ENCODE measurements at regions of chr1 and their contacts with region 1.

Region 1: DNA sequence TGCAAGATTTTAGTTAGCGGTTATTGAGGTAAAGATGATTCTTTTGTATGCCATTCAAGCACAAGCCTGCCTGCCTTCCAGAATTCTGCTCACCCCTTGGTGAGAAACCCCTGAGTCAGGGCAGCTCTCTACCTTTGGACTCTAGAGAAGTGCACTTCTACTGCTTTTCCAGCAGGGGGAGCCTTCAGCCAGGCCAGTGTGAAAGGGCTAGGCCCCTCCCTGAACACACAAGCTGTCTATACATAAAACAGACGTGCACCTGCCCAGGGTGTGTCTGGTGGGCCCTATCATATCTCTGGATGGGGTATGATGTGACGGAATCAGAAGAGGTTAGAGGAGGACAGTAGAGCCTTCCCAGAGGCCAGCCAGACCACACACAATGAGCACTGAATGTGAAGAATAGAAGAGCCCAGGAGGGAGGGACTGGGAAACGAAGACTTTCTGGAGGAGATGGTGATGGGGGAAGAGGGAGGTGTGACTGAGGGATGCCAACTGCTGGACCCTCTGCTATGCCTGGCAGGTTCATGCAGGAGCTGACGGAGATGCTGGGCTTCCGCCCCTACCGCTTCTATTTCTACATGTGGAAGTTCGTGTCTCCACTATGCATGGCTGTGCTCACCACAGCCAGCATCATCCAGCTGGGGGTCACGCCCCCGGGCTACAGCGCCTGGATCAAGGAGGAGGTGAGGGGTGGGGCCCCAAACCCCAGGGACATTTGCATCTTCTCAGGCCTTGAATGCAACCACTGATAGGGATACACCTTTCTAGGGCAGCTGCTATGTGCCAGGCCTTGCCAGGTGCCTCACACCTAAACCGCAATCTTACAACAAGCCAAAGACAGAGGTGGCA is 13.0 kb upstream of the KCNC4 start:
- DNase-seq: peak in 34 of 35 experiments; percentile 17 to 65 (median 40)
- ATAC-seq: peak; percentile 82 to 93 (median 86)
- H3K4me3 ChIP-seq: no peak overlapping the region
- H3K4me3 Mint-ChIP-seq: no peak overlapping the region
- H3K27ac ChIP-seq: no peak overlapping the region
- H3K27ac Mint-ChIP-seq: no peak overlapping the region
- H3K4me1 ChIP-seq: no peaks in the 10 kb centered on the region
- H3K4me1 Mint-ChIP-seq: peaks cover 0 to 8% (median 2%) of the 10 kb centered on the region in 3 donors
- H3K27me3 ChIP-seq: peaks cover 0 to 6% of the 10 kb centered on the region in 2 experiments
- H3K27me3 Mint-ChIP-seq: no peaks in the 10 kb centered on the region

Region 2: DNA sequence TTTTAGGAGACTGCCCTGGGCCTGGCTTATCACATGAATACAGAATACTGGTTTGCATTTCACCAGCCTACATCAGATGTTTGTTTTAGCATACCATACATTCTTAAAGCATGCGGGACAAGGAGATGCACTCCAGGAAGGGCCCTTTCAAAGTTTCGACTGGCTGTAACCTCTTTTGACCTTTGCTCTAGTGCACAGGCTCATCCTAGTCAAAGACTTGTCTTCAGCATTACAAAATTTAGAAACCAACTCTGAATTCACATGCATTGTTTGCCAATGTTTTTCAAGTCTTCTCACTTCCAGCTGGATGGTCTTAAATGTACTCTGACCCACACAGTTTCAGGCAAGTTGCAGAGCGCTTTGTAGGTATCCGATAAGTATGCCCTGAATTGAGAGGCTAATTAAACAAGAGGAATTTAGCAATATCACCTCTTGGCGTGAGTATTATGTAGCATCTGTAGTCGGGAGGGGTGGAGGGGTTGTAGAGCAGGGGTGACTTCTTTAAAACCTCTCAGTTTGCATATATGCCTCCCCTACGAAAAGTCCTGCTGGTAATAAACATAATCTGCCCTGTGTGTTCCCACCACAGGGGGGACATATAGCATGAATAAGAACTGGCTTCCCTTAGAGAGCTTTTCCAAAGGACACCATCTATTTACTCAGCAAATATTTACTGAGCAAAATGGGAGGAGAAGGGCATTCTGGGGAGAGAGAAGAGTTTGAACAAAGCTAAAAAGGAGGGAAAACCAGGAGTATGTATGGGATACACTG is 237.0 kb before region 1 on chr1:
- CTCF ChIA-PET with region 1: no interaction called
- POLR2A ChIA-PET with region 1: no interaction called
- DNase-seq: no peak
- ATAC-seq: no peak
- H3K4me3 ChIP-seq: no peak overlapping the region
- H3K4me3 Mint-ChIP-seq: no peak overlapping the region
- H3K27ac ChIP-seq: no peak overlapping the region
- H3K27ac Mint-ChIP-seq: no peak overlapping the region
- H3K4me1 ChIP-seq: no peaks in the 10 kb centered on the region
- H3K4me1 Mint-ChIP-seq: no peaks in the 10 kb centered on the region
- H3K27me3 ChIP-seq: peaks cover 0 to 10% of the 10 kb centered on the region in 2 experiments
- H3K27me3 Mint-ChIP-seq: peaks cover 10 to 13% of the 10 kb centered on the region in 2 donors

Region 3: GRCh38 chr1:110176299-110176956 is 20.7 kb before region 1 on chr1:
- CTCF ChIA-PET with region 1: no interaction called
- POLR2A ChIA-PET with region 1: no interaction called
- DNase-seq: no peak
- ATAC-seq: no peak
- H3K4me3 ChIP-seq: no peak overlapping the region
- H3K4me3 Mint-ChIP-seq: no peak overlapping the region
- H3K27ac ChIP-seq: no peak overlapping the region
- H3K27ac Mint-ChIP-seq: no peak overlapping the region
- H3K4me1 ChIP-seq: no peaks in the 10 kb centered on the region
- H3K4me1 Mint-ChIP-seq: no peaks in the 10 kb centered on the region
- H3K27me3 ChIP-seq: peaks cover 0 to 43% of the 10 kb centered on the region in 2 experiments
- H3K27me3 Mint-ChIP-seq: peaks cover 9% of the 10 kb centered on the region in 2 donors

Region 4: DNA sequence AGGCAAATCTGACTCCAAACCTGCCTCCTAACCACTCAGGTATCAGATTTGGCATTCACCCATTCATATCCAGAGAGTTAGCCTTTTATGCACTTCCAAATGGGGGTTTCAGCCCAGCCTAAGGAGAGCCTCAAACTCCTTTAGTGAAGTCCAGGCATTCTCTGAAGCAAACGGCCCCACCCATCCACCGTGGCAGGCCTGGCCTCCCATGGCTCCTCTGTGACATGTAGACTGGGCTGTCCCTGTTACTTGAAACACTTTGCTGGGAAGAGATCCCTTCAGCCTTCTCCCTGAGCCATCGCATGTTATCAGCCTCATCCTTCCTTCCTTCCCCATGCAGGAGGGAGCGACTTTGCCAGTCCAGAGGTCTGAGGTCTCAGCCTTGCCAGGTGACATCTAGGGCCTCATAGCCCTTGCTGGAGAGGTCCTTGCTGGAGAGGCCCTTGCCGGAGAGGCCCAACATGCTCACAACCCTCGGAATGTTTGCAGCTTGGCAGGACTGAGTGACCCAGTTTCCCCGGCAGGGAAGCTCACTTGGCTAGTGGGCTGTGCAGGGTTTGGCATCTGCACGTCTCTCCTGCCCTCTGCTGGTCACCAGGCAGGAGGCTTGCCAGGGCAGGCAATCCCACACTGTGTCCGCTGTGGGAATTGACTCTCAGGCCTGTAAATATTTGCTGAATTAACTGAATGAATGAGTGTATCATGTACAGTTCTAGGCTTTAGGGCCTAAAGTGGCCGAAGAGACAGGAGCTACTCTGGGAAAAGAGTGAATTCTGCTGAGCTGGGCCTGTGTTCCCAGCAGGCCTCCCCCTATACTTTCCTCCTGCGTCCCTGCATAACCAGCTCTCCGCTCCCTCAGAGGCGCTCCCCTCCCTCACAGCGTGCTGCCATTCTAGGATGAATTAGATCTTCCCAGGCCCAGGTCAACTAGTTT is 115.3 kb after region 1 on chr1:
- CTCF ChIA-PET with region 1: interaction called, 43 to 181 read pairs
- POLR2A ChIA-PET with region 1: no interaction called
- DNase-seq: peak; percentile 42 to 84 (median 66)
- ATAC-seq: peak; percentile 94 to 100 (median 97)
- H3K4me3 ChIP-seq: no peak overlapping the region
- H3K4me3 Mint-ChIP-seq: no peak overlapping the region
- H3K27ac ChIP-seq: no peak overlapping the region
- H3K27ac Mint-ChIP-seq: no peak overlapping the region
- H3K4me1 ChIP-seq: peaks cover 0 to 7% of the 10 kb centered on the region in 2 experiments
- H3K4me1 Mint-ChIP-seq: peaks cover 2 to 9% (median 3%) of the 10 kb centered on the region in 3 donors
- H3K27me3 ChIP-seq: no peaks in the 10 kb centered on the region
- H3K27me3 Mint-ChIP-seq: no peaks in the 10 kb centered on the region

Region 5: DNA sequence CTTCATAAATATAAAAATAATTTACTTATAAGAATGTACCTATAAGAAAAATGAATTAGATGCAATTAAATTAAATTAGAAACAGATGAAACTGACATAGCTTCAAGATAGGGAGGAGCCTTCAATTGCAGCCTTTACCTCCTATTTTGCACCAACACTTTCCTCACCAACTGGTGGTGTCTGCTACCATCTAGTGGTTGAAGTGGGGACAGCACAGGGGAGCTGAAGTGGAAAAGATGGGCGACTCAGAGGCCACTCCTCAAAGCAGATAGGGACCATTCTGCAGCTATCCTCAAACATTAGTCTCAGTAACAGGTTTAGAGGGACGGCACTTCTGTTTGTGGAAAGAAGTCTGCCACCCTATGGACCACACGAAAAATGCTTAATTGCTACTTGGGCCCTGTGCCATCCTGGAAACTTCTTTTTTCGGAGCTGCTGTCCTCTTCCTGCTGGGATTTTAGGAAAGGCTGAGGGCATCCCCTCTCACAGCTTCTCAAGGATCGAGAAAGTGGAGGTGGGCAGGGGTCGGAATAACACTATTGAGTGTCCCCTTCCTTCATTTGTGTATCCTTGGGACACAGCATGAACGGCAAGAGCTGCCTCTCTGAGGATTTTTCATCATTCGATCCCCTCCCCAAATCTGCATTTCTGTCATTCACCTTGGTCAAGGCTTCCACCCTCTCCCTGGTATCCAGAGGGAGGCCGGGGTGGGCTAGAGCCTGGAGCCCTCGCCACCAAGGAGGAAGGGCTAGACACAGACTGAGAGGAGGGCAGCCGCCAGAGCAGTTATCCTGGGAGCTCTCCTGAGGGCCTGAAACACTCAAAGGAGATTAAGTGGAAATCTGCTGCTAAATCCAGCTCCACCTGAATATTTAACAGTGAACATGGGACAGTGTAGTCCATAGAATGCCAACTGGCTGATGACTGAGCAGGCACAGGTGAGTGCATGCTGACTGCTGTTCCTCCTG is 263.4 kb after region 1 on chr1:
- CTCF ChIA-PET with region 1: interaction called, 21 to 55 read pairs
- POLR2A ChIA-PET with region 1: no interaction called
- DNase-seq: peak; percentile 55 to 89 (median 79)
- ATAC-seq: peak; percentile 90 to 92 (median 91)
- H3K4me3 ChIP-seq: no peak overlapping the region
- H3K4me3 Mint-ChIP-seq: no peak overlapping the region
- H3K27ac ChIP-seq: no peak overlapping the region
- H3K27ac Mint-ChIP-seq: no peak overlapping the region
- H3K4me1 ChIP-seq: no peaks in the 10 kb centered on the region
- H3K4me1 Mint-ChIP-seq: no peaks in the 10 kb centered on the region
- H3K27me3 ChIP-seq: peaks cover 0 to 10% of the 10 kb centered on the region in 2 experiments
- H3K27me3 Mint-ChIP-seq: peaks cover 3 to 4% of the 10 kb centered on the region in 2 donors

Region 6: GRCh38 chr1:110495926-110496600 is 298.9 kb after region 1 on chr1:
- CTCF ChIA-PET with region 1: interaction called, 4 to 22 read pairs
- POLR2A ChIA-PET with region 1: no interaction called
- DNase-seq: peak; percentile 36 to 86 (median 65)
- ATAC-seq: peak; percentile 70 to 85 (median 80)
- H3K4me3 ChIP-seq: no peak overlapping the region
- H3K4me3 Mint-ChIP-seq: no peak overlapping the region
- H3K27ac ChIP-seq: no peak overlapping the region
- H3K27ac Mint-ChIP-seq: no peak overlapping the region
- H3K4me1 ChIP-seq: no peaks in the 10 kb centered on the region
- H3K4me1 Mint-ChIP-seq: no peaks in the 10 kb centered on the region
- H3K27me3 ChIP-seq: peaks cover 0 to 10% of the 10 kb centered on the region in 2 experiments
- H3K27me3 Mint-ChIP-seq: peaks cover 0 to 4% of the 10 kb centered on the region in 2 donors